ENCODE measurements at regions of chr21 and their contacts with region 1.

Region 1: GRCh38 chr21:28971171-28971570 is 21.5 kb downstream of the LTN1 start:
- DNase-seq: no peak
- H3K4me3 ChIP-seq: no peak overlapping the region
- H3K27ac ChIP-seq: no peak overlapping the region
- H3K4me1 ChIP-seq: no peaks in the 10 kb centered on the region
- CTCF ChIP-seq: no peak

Region 2: DNA sequence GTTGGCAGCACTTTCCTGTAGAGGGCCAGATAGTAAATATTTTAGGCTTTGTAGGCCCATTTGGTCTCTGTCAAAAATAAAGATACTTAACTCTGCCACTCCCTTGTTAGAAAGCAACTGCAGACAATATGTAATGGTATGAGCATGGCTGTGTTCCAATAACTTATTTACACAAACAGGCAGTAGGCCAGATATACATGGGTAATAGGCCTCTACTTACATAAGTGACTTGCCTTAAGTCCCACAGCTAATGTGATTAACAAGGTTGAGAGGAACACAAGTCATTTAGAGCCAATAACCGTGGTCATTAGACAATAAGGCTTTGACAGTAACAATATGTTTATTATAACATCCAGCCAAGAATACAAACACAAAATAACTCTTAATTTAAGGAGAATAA is 84.8 kb after region 1 on chr21:
- CTCF ChIA-PET with region 1: no interaction called
- POLR2A ChIA-PET with region 1: interaction called, 10 read pairs
- intact Hi-C with region 1: no loop called
- DNase-seq: no peak
- H3K4me3 ChIP-seq: no peak overlapping the region
- H3K27ac ChIP-seq: no peak overlapping the region
- H3K4me1 ChIP-seq: peaks cover 11% of the 10 kb centered on the region
- CTCF ChIP-seq: no peak

Measured in OCI-LY7 (cell line).